Activated T-helper 1 cell treated with anti-CD3 and anti-CD28 coated beads, Interleukin-12 subunit alpha, Interleukin-12 subunit beta, Interleukin-2, Interleukin-4 antibody, amounts not matched to agents 30 ng/mL and 10 ng/mL and 1 ng/mL, durations not matched to agents 14 hours and 24 hours and 36 hours (primary cell): ENCODE measurements at regions of chr14 and their contacts with region 1.

Region 1: GRCh38 chr14:65412032-65412846 is at the start of gene FUT8:
- DNase-seq: peak; percentile 87
- H3K4me3 Mint-ChIP-seq: peak within 1 kb of the TSS; percentile 98
- H3K27ac Mint-ChIP-seq: peak within 1 kb of the TSS; percentile 92
- H3K4me1 Mint-ChIP-seq: peaks cover 72% of the 10 kb centered on the region
- H3K27me3 Mint-ChIP-seq: no peaks in the 10 kb centered on the region
- total RNA-seq, gene FUT8: 181 and 182 TPM in 2 replicates

Region 2: GRCh38 chr14:64855721-64856528 is 556.3 kb before region 1 on chr14:
- intact Hi-C with region 1: no loop called
- DNase-seq: no peak
- H3K4me3 Mint-ChIP-seq: no peak overlapping the region
- H3K27ac Mint-ChIP-seq: no peak overlapping the region
- H3K4me1 Mint-ChIP-seq: no peaks in the 10 kb centered on the region
- H3K27me3 Mint-ChIP-seq: peaks cover 21% of the 10 kb centered on the region

Region 3: DNA sequence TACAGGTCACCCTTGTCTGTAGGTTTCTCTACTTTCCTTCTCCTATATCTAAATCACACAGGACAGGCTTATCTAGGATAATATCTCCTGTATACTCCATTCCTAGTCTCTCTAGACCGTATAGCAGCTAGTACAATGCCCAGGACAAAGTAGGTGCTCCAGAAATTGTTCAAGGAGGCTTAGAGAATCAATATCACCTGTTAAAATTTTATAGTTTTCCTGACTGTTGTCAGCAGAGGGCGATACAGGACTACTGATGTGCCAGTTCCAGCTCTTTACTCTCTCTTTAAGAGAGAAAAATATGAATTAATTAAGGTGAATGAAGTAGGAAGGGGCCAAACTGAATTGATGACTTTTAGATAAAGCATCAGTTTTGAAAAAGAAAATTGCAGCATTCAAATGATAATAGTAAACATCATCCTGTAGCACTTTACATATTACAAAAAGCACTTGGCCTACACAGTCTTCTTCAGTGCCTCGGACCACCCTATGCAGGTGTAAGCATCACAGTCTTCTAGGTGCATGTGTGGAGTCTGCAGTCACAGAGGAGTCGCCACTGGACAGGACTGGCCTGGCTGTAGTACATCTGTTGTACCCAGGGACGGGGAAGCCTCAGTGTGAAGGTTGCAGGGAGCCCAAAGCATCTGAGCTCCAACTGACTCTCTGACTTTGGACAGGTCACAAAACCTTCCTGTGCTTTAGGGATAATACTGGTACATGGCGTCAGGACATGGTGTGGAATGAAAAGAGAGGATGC is 248.0 kb before region 1 on chr14:
- intact Hi-C with region 1: loop called (anchors 1 kb)
- DNase-seq: peak; percentile 23
- H3K4me3 Mint-ChIP-seq: no peak overlapping the region
- H3K27ac Mint-ChIP-seq: no peak overlapping the region
- H3K4me1 Mint-ChIP-seq: peaks cover 50% of the 10 kb centered on the region
- H3K27me3 Mint-ChIP-seq: peaks cover 2% of the 10 kb centered on the region

Region 4: GRCh38 chr14:65222440-65222858 is 189.8 kb before region 1 on chr14:
- intact Hi-C with region 1: loop called (anchors 1 kb)
- DNase-seq: peak; percentile 34
- H3K4me3 Mint-ChIP-seq: no peak overlapping the region
- H3K27ac Mint-ChIP-seq: peak overlapping the region; percentile 41
- H3K4me1 Mint-ChIP-seq: peaks cover 48% of the 10 kb centered on the region
- H3K27me3 Mint-ChIP-seq: no peaks in the 10 kb centered on the region

Region 5: DNA sequence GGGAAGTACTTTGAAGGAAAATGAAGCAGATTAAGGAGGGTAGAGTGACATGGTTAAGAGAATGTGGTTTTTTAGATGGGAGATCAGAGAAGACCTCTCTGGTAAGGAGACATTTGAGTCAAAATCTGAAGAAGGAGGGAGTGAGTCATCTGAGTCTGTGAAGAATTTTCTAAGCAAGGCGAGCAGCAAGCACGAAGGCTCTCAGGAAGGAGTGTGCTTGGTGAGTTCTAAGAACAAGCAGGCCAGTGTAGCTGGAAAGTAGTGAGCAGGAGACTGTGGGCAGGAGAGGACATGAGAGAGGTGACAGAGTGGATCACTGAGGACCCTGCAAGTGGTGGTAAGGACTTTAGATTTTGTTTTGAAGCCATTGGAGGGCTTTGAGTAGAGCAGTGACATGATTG is 76.0 kb before region 1 on chr14:
- intact Hi-C with region 1: loop called (anchors 1 kb)
- DNase-seq: peak; percentile 63
- H3K4me3 Mint-ChIP-seq: peak overlapping the region; percentile 91
- H3K27ac Mint-ChIP-seq: peak overlapping the region; percentile 96
- H3K4me1 Mint-ChIP-seq: peaks cover 59% of the 10 kb centered on the region
- H3K27me3 Mint-ChIP-seq: no peaks in the 10 kb centered on the region

Region 6: DNA sequence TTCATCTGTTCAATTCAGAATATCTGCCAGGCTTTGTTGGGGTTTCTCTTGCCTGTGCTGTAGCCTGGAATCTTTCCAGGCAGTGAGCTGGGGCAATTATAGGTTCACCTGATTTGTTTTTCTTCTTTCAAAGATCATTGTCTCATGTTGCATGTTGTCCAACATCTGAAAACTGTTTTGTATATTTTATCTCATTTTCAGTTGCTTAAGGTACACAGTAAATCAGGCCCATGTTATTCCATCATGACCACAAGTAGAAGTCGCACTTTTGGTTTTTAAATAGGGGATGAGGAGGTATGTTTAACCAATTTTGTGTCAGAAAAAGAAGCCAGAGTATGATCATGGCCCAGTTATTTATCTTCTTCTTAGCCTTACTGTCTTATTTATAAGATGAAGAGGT is 24.6 kb before region 1 on chr14:
- intact Hi-C with region 1: no loop called
- DNase-seq: no peak
- H3K4me3 Mint-ChIP-seq: no peak overlapping the region
- H3K27ac Mint-ChIP-seq: peak overlapping the region; percentile 68
- H3K4me1 Mint-ChIP-seq: peaks cover 20% of the 10 kb centered on the region
- H3K27me3 Mint-ChIP-seq: no peaks in the 10 kb centered on the region

Region 7: GRCh38 chr14:65423982-65424381 is 11.7 kb after region 1 on chr14:
- intact Hi-C with region 1: no loop called
- DNase-seq: no peak
- H3K4me3 Mint-ChIP-seq: no peak overlapping the region
- H3K27ac Mint-ChIP-seq: no peak overlapping the region
- H3K4me1 Mint-ChIP-seq: peaks cover 57% of the 10 kb centered on the region
- H3K27me3 Mint-ChIP-seq: no peaks in the 10 kb centered on the region

Region 8: GRCh38 chr14:65438266-65438933 is 26.2 kb after region 1 on chr14:
- intact Hi-C with region 1: loop called (anchors 1 kb)
- DNase-seq: no peak
- H3K4me3 Mint-ChIP-seq: peak overlapping the region; percentile 38
- H3K27ac Mint-ChIP-seq: peak overlapping the region; percentile 90
- H3K4me1 Mint-ChIP-seq: peaks cover 46% of the 10 kb centered on the region
- H3K27me3 Mint-ChIP-seq: no peaks in the 10 kb centered on the region

Region 9: GRCh38 chr14:65637780-65638179 is 225.5 kb after region 1 on chr14:
- intact Hi-C with region 1: loop called (anchors 2 kb)
- DNase-seq: peak; percentile 31
- H3K4me3 Mint-ChIP-seq: peak overlapping the region; percentile 34
- H3K27ac Mint-ChIP-seq: peak overlapping the region; percentile 79
- H3K4me1 Mint-ChIP-seq: peaks cover 49% of the 10 kb centered on the region
- H3K27me3 Mint-ChIP-seq: no peaks in the 10 kb centered on the region

Region 10: DNA sequence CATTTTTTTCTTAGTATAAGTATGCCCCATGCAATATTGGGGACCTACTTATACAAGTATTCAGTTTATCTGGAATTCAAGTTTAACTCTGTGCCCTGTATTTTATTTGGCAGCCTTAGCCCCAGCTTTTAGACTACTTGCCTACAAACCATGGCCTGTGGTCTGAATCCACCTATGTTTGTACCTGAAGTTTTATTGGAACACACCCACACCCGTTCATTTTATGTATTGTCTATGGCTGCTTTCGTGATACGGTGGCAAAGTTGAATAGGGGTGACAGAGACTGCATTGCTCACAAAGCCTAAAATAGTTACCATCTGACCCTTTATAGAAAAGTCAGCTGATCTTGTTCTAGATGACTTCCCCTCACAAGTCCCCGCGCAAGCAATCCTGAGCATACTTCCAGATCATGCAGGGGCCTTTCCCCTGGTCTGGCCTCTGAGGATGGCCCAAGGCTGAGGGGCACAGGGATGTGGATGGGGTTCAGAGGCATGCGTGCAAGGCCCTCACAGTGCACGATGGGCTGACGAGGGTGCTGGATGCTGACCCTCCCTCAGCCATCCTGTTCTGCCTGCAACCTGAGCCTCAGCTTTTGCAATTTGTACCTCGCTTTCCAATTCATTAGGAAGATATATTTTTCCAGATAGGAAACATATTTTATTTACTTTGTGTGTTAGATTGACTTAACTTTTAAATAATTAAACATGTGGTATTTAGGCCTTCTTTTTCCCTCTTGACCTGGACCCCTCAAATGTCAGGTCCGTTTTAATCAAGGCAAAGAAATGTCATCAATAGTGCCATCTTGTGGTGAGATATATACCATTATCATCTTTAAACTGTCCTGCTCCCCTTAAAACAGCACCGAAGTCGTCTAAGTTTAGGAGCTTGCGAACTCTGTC is 546.7 kb after region 1 on chr14:
- intact Hi-C with region 1: loop called (anchors 1 kb)
- DNase-seq: no peak
- H3K4me3 Mint-ChIP-seq: no peak overlapping the region
- H3K27ac Mint-ChIP-seq: no peak overlapping the region
- H3K4me1 Mint-ChIP-seq: peaks cover 23% of the 10 kb centered on the region
- H3K27me3 Mint-ChIP-seq: peaks cover 6% of the 10 kb centered on the region